ENCODE measurements at regions of chr1 and their contacts with region 1.

Region 1: GRCh38 chr1:52473039-52473438 is 68.6 kb downstream of the PRPF38A start:
- DNase-seq: peak; percentile 45
- ATAC-seq: peak; percentile 65
- H3K4me3 ChIP-seq: no peak overlapping the region
- H3K27ac ChIP-seq: no peak overlapping the region
- H3K4me1 ChIP-seq: peaks cover 27% of the 10 kb centered on the region
- H3K27me3 ChIP-seq: no peaks in the 10 kb centered on the region
- CTCF ChIP-seq: no peak
- EP300 ChIP-seq: peak in 1 of 2 experiments; percentile 34; a peak in 1 of 4 replicates
- POLR2A ChIP-seq: no peak
- RAD21 ChIP-seq: no peak

Region 2: GRCh38 chr1:52460694-52461093 is 12.3 kb before region 1 on chr1:
- CTCF ChIA-PET with region 1: no interaction called
- POLR2A ChIA-PET with region 1: no interaction called
- in situ Hi-C with region 1: no loop called
- intact Hi-C with region 1: no loop called
- DNase-seq: no peak
- ATAC-seq: no peak
- H3K4me3 ChIP-seq: no peak overlapping the region
- H3K27ac ChIP-seq: no peak overlapping the region
- H3K4me1 ChIP-seq: peaks cover 9% of the 10 kb centered on the region
- H3K27me3 ChIP-seq: no peaks in the 10 kb centered on the region; a peak in 1 of 5 replicates
- CTCF ChIP-seq: no peak
- EP300 ChIP-seq: no peak
- POLR2A ChIP-seq: no peak
- RAD21 ChIP-seq: no peak

Region 3: GRCh38 chr1:52523376-52523775 is 50.3 kb after region 1 on chr1:
- CTCF ChIA-PET with region 1: no interaction called
- POLR2A ChIA-PET with region 1: no interaction called
- in situ Hi-C with region 1: no loop called
- intact Hi-C with region 1: loop called (anchors 2 kb)
- DNase-seq: no peak
- ATAC-seq: no peak
- H3K4me3 ChIP-seq: no peak overlapping the region
- H3K27ac ChIP-seq: no peak overlapping the region
- H3K4me1 ChIP-seq: no peaks in the 10 kb centered on the region
- H3K27me3 ChIP-seq: no peaks in the 10 kb centered on the region
- CTCF ChIP-seq: no peak
- EP300 ChIP-seq: no peak
- POLR2A ChIP-seq: no peak
- RAD21 ChIP-seq: no peak

Region 4: DNA sequence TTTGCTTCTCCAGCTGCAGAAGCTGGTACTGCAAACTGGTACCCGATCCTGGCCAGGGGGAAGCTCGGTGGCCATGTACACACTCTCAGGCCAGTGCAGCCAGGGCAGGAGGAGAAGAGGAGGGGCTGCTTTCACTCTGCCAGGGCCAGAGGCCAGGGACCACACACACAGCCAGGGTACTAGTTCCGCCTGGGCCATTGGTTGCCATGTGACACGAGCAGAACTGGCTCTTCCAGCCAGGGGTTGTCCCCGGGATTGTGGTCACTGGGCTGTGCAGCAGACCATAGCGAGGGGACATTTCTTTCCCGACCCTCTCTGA is 156.2 kb after region 1 on chr1:
- CTCF ChIA-PET with region 1: no interaction called
- POLR2A ChIA-PET with region 1: no interaction called
- in situ Hi-C with region 1: no loop called
- intact Hi-C with region 1: no loop called
- DNase-seq: peak; percentile 41
- ATAC-seq: peak; percentile 93
- H3K4me3 ChIP-seq: peak overlapping the region in 1 of 3 experiments; percentile 57; a peak in 2 of 6 replicates
- H3K27ac ChIP-seq: no peak overlapping the region
- H3K4me1 ChIP-seq: peaks cover 41% of the 10 kb centered on the region
- H3K27me3 ChIP-seq: peaks cover 2 to 7% of the 10 kb centered on the region in 2 experiments; a peak in 2 of 5 replicates
- CTCF ChIP-seq: no peak
- EP300 ChIP-seq: no peak
- POLR2A ChIP-seq: no peak
- RAD21 ChIP-seq: no peak

Measured in HepG2 (cell line).